Tibial artery (tissue), 4 donors: ENCODE measurements at regions of chr17 and their contacts with region 1.

Region 1: DNA sequence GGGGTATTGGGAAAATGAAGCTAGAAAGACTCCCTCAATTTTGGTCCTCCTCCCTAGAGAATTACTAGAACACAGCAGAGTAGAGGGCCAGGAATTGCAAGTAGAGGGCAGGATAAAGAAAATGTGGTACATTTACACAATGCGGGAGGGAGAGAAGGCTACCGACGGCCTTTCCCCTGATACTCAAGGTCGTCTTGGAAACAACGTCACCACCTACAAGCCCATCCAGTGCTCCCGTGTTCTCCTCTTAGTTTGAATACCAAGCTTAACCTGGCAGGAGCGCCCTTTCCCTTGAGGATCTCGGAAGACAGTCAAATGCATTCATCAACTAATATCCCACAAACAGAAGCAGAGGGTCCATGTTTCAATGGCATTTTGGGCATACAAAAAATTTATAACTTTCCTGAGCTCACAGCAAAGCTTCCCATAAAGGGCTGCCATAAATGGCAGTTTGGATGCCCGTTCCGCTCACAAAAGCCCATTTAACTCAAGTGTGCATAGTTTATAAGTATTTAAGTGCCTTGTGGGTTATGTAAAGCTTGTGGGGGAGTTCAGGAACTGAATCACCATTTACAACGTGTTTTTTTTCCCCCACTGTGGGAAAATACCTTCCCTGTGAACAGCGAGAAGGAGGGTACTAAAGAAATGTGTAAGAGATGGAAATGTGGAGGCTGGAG is 414.6 kb downstream of the SLC39A11 start:
- DNase-seq: no peak
- H3K4me3 ChIP-seq: no peak overlapping the region
- H3K27ac ChIP-seq: no peak overlapping the region
- H3K4me1 ChIP-seq: peaks cover 0 to under 1% (median 0%) of the 10 kb centered on the region in 4 donors
- H3K27me3 ChIP-seq: no peaks in the 10 kb centered on the region
- CTCF ChIP-seq: no peak

Region 2: GRCh38 chr17:72691586-72691985 is 13.7 kb after region 1 on chr17:
- intact Hi-C with region 1: loop called (anchors 1 kb)
- DNase-seq: no peak
- H3K4me3 ChIP-seq: no peak overlapping the region
- H3K27ac ChIP-seq: no peak overlapping the region
- H3K4me1 ChIP-seq: no peaks in the 10 kb centered on the region
- H3K27me3 ChIP-seq: no peaks in the 10 kb centered on the region
- CTCF ChIP-seq: no peak